ENCODE measurements at regions of chr7 and their contacts with region 1.

Region 1: DNA sequence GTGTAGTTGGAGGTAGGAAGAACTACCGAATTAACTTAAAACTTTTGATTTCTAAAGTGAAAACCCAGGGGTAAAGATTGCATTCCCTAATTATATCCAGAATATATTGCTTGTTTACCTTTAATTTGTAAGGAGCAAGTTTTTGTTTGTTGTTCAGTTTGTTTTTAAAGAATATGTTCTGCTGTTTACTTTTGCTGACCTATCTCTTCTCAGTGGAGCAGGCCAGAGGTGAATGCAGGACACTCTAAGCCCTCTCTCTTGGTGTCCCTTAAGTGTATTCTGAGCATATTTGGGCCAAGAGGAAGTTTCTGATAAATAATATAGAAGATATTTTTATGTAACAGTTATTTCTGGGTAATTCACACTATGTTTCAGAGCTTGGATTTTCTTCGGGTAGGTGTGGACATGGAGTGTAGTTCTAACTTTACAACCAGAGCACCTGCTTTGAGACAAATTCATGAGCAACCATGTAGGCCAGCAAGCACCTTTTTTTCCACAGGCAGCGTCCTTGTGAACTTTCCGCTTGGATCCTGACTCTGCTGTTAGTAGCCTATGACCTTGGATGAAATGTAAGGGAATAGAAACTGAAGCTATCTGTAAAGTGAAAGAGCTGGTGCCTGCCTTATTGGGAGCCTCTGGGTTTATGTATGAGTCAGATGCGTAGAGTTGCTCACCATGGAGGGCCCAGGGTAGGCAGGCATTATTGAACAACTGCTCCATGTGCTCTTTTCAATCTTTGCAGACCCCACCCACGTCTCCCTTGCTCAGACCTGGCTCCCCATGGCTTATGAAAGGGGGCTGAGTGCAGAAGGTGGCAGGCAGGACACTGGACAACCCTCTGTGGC is 16.1 kb downstream of the OGDH start:
- DNase-seq: peak; percentile 72
- ATAC-seq: peak; percentile 90
- H3K4me3 Mint-ChIP-seq: peak overlapping the region; percentile 50
- H3K27ac Mint-ChIP-seq: peak overlapping the region; percentile 94
- H3K4me1 Mint-ChIP-seq: peaks cover 90% of the 10 kb centered on the region
- H3K27me3 Mint-ChIP-seq: no peaks in the 10 kb centered on the region

Region 2: GRCh38 chr7:44257618-44258422 is 364.7 kb before region 1 on chr7:
- CTCF ChIA-PET with region 1: no interaction called
- POLR2A ChIA-PET with region 1: no interaction called
- intact Hi-C with region 1: no loop called
- DNase-seq: peak; percentile 90
- ATAC-seq: peak; percentile 91
- H3K4me3 Mint-ChIP-seq: peak overlapping the region; percentile 30
- H3K27ac Mint-ChIP-seq: peak overlapping the region; percentile 90
- H3K4me1 Mint-ChIP-seq: peaks cover 46% of the 10 kb centered on the region
- H3K27me3 Mint-ChIP-seq: no peaks in the 10 kb centered on the region

Region 3: GRCh38 chr7:44633254-44634186 is 11.0 kb after region 1 on chr7:
- CTCF ChIA-PET with region 1: interaction called, 19 read pairs
- POLR2A ChIA-PET with region 1: interaction called, 29 read pairs
- intact Hi-C with region 1: loop called (anchors 1 kb)
- DNase-seq: peak; percentile 72
- ATAC-seq: peak; percentile 57
- H3K4me3 Mint-ChIP-seq: peak overlapping the region; percentile 51
- H3K27ac Mint-ChIP-seq: peak overlapping the region; percentile 93
- H3K4me1 Mint-ChIP-seq: peaks cover 93% of the 10 kb centered on the region
- H3K27me3 Mint-ChIP-seq: no peaks in the 10 kb centered on the region